CD4-positive, alpha-beta memory T cell (primary cell): ENCODE measurements at regions of chr3 and their contacts with region 1.

Region 1: DNA sequence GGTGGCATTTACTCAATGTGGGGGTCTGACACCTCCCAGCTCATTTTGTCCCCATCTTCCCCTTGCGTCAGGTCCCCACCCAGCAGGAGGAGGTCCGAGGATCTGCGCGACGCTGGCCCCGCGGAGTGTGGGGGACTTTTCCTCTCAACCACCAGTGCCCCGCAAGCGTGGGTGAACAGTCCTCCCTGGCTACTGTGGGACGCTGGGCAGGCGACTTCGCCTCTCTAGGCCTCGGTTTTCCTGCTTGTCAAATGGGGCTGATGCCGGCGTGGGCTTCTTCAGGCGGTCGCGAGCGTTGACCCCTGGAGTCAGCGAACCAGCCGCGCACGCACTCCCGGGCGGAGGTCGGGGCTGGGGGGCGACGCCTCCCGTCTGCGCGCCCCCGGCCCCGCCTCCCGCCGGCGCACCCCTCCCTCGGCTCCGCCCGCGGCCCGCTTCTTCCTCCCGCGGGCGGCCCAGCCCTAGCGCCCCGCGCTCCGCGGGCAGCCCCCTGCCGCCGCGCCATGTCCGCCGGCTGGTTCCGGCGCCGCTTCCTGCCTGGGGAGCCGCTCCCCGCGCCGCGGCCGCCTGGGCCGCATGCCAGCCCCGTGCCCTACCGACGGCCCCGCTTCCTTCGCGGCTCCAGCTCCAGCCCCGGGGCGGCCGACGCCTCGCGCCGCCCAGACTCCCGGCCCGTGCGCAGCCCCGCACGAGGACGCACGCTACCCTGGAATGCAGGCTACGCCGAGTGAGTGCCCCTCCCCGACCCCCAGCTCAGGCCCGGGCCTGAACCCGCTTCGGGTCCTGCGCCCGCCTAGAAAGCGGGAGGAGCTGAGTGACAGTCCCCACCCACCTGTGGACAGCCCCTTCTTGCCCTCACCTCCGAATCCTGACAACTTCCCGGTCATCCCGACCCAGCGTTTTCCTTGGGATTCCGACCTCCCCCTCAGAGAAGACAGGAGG is at the start of gene PPM1M:
- DNase-seq: peak; percentile 71 to 84 (median 79)
- H3K4me3 ChIP-seq: peak within 1 kb of the TSS; percentile 88 to 95
- H3K4me3 Mint-ChIP-seq: peak within 1 kb of the TSS; percentile 82 to 94 (median 90)
- H3K27ac ChIP-seq: peak within 1 kb of the TSS; percentile 90
- H3K27ac Mint-ChIP-seq: peak within 1 kb of the TSS; percentile 95 to 97 (median 96)
- H3K4me1 ChIP-seq: peaks cover 85% of the 10 kb centered on the region
- H3K4me1 Mint-ChIP-seq: peaks cover 53 to 90% (median 72%) of the 10 kb centered on the region in 4 donors
- H3K27me3 ChIP-seq: no peaks in the 10 kb centered on the region
- H3K27me3 Mint-ChIP-seq: no peaks in the 10 kb centered on the region
- total RNA-seq, gene PPM1M: 70.2 to 81.1 TPM

Region 2: GRCh38 chr3:52225452-52226228 is 20.0 kb before region 1 on chr3 and contains the start of gene TLR9:
- CTCF ChIA-PET with region 1: interaction called, 21 read pairs
- POLR2A ChIA-PET with region 1: interaction called, 18 read pairs
- intact Hi-C with region 1: no loop called
- DNase-seq: no peak
- H3K4me3 ChIP-seq: no peak within 1 kb of the TSS
- H3K4me3 Mint-ChIP-seq: peak within 1 kb of the TSS in 7 of 8 donors; percentile 26 to 65 (median 54)
- H3K27ac ChIP-seq: peak within 1 kb of the TSS; percentile 4
- H3K27ac Mint-ChIP-seq: peak within 1 kb of the TSS; percentile 64 to 93 (median 90)
- H3K4me1 ChIP-seq: peaks cover 61% of the 10 kb centered on the region
- H3K4me1 Mint-ChIP-seq: peaks cover 32 to 75% (median 58%) of the 10 kb centered on the region in 4 donors
- H3K27me3 ChIP-seq: no peaks in the 10 kb centered on the region
- H3K27me3 Mint-ChIP-seq: no peaks in the 10 kb centered on the region
- total RNA-seq, gene TLR9: 2.3 to 3.0 TPM

Region 3: DNA sequence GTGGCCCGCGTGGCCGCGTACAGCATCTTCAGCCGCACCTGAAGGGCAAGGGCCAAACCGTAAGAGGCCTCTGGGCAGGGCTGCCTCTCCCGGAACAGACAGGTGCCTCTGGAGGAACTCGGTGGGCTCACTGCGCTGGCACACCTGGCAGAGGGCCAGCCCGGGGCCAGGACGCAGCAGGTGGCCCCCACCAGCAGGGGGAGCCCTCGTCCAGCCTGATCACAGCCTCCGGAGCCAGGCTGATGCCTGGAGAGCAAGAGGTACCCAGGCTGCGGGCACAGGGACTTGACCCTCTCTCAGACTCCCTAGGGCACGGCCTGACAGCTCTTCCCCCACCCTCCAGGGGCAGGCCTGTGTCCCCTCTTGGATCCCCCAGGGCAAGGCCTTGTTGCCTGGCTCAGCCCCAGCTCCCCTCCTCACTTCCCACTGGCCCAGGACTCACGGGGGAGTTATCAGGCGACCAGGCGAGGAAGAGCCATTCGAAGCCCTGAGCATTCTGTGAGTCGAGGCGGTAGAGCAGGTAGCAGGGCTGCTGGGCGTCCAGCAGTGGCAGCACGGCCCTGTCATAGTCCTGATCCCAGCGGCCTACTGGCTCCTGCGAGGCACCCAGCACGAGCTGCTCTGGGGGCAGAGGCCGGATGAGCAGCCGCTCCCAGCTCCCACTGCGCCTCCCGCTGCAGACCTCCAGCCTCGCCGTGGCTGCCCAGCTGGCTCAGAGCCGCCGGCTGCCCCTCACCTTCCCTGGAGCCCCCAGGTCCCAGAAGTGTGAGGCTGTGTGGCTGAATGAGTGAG is 13.9 kb before region 1 on chr3:
- CTCF ChIA-PET with region 1: interaction called, 17 read pairs
- POLR2A ChIA-PET with region 1: interaction called, 75 read pairs
- intact Hi-C with region 1: no loop called
- DNase-seq: peak; percentile 82 to 88 (median 85)
- H3K4me3 ChIP-seq: no peak overlapping the region
- H3K4me3 Mint-ChIP-seq: peak overlapping the region in 7 of 8 donors; percentile 35 to 82 (median 66)
- H3K27ac ChIP-seq: no peak overlapping the region
- H3K27ac Mint-ChIP-seq: peak overlapping the region; percentile 29 to 89 (median 81)
- H3K4me1 ChIP-seq: peaks cover 57% of the 10 kb centered on the region
- H3K4me1 Mint-ChIP-seq: peaks cover 23 to 77% (median 43%) of the 10 kb centered on the region in 4 donors
- H3K27me3 ChIP-seq: no peaks in the 10 kb centered on the region
- H3K27me3 Mint-ChIP-seq: no peaks in the 10 kb centered on the region

Region 4: DNA sequence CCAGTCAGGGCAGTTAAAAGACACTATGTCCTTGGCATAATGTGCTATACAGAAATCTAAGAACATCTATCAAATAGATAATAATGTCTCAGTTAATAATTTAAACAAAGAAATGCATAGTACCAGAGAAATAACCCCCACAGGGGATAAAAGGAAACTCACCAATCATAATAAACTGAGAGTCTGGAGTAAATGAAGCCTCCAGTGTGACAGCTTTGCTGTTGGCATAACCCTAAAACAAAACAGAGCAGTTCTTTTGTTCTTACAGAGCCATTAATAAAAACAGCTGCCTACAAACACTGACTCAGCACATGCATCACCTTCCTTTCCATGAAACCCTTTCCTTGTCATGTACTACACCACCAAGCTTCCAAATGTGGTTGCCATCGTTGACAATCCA is 13.4 kb after region 1 on chr3:
- CTCF ChIA-PET with region 1: interaction called, 684 read pairs
- POLR2A ChIA-PET with region 1: interaction called, 1,950 read pairs
- intact Hi-C with region 1: no loop called
- DNase-seq: no peak
- H3K4me3 ChIP-seq: no peak overlapping the region
- H3K4me3 Mint-ChIP-seq: no peak overlapping the region
- H3K27ac ChIP-seq: peak overlapping the region; percentile 45
- H3K27ac Mint-ChIP-seq: peak overlapping the region; percentile 49 to 97 (median 83)
- H3K4me1 ChIP-seq: peaks cover 97% of the 10 kb centered on the region
- H3K4me1 Mint-ChIP-seq: peaks cover 57 to 98% (median 83%) of the 10 kb centered on the region in 4 donors
- H3K27me3 ChIP-seq: no peaks in the 10 kb centered on the region
- H3K27me3 Mint-ChIP-seq: no peaks in the 10 kb centered on the region